Cardiac septum (tissue), 1 donor: ENCODE measurements at regions of chr20 and their contacts with region 1.

Region 1: DNA sequence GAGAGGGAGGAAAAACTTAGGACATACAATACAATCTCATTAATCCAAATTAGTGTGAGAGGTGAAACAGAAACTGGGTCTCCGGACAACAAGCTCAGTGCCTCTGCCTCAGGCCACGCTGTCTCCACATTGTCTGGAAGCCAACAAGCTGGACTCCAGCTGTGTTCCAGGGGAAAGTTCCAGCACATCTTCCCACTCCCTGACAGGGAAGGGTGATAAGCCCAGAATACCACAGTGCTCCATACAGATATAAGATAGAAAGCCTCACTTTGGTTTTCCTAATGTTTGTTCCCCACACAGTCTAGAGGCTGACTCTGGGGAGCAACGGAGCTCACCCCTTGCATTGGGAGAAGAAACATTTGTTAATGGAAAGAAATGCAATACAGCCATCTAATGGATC is 117.1 kb upstream of the SPTLC3 start:
- DNase-seq: no peak

Region 2: DNA sequence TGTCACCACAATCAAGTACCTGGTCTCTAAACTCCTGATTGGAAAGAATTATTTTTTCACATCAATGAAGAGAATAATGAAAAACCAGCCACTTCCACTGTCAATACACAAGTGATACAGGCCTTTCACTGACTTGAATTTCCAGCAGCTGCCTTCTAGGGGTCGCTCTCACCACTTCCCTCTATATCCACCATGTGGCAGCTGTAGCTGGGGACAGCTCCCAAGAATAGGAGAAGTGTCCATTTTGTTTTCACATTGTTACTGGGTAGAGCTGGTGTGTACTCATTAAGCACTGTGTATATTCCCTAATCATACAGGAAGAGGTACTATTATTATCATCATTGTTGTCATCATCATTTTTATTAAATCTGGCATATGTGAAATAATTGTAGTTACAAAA is 321.3 kb before region 1 on chr20:
- intact Hi-C with region 1: no loop called
- DNase-seq: no peak

Region 3: DNA sequence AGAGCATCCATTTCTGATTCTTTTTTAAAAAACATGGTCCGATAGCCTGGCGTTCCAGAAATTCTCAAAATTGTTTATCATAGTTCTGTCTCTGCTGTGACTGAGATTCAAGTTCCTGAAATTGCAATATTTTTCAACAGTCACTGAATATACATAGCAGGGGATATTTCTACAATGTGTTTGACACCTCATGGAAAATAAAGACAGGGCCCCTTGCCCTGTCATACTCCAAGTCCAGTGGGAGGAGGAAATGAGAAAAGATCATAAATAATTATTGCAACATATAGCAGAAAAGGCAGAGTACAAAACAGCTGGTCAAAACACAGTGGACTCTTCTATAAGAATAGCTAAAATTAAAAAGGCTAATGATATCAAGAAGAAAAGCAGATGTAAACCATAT is 117.7 kb before region 1 on chr20:
- intact Hi-C with region 1: loop called (anchors 5 kb)
- DNase-seq: no peak

Region 4: GRCh38 chr20:13525225-13525940 is 633.7 kb after region 1 on chr20:
- intact Hi-C with region 1: no loop called
- DNase-seq: no peak